Caco-2 (cell line): ENCODE measurements at regions of chr14 and their contacts with region 1.

Region 1: GRCh38 chr14:104976198-104977007 is 1.8 kb downstream of the AHNAK2 start:
- DNase-seq: peak; percentile 85 to 91
- H3K4me3 ChIP-seq: no peak overlapping the region
- H3K4me3 Mint-ChIP-seq: peak overlapping the region; percentile 59
- H3K27ac Mint-ChIP-seq: no peak overlapping the region
- H3K4me1 ChIP-seq: peaks cover 13% of the 10 kb centered on the region
- H3K4me1 Mint-ChIP-seq: peaks cover 7% of the 10 kb centered on the region
- H3K27me3 ChIP-seq: no peaks in the 10 kb centered on the region
- H3K27me3 Mint-ChIP-seq: peaks cover 2% of the 10 kb centered on the region
- CTCF ChIP-seq: peak; percentile 87 to 96

Region 2: GRCh38 chr14:104600141-104600643 is 376.2 kb before region 1 on chr14:
- CTCF ChIA-PET with region 1: no interaction called
- POLR2A ChIA-PET with region 1: no interaction called
- intact Hi-C with region 1: no loop called
- DNase-seq: no peak
- H3K4me3 ChIP-seq: no peak overlapping the region
- H3K4me3 Mint-ChIP-seq: no peak overlapping the region
- H3K27ac Mint-ChIP-seq: no peak overlapping the region
- H3K4me1 ChIP-seq: no peaks in the 10 kb centered on the region
- H3K4me1 Mint-ChIP-seq: no peaks in the 10 kb centered on the region
- H3K27me3 ChIP-seq: no peaks in the 10 kb centered on the region; the same call in 1 of the 2 replicates
- H3K27me3 Mint-ChIP-seq: peaks cover 19% of the 10 kb centered on the region
- CTCF ChIP-seq: no peak

Region 3: DNA sequence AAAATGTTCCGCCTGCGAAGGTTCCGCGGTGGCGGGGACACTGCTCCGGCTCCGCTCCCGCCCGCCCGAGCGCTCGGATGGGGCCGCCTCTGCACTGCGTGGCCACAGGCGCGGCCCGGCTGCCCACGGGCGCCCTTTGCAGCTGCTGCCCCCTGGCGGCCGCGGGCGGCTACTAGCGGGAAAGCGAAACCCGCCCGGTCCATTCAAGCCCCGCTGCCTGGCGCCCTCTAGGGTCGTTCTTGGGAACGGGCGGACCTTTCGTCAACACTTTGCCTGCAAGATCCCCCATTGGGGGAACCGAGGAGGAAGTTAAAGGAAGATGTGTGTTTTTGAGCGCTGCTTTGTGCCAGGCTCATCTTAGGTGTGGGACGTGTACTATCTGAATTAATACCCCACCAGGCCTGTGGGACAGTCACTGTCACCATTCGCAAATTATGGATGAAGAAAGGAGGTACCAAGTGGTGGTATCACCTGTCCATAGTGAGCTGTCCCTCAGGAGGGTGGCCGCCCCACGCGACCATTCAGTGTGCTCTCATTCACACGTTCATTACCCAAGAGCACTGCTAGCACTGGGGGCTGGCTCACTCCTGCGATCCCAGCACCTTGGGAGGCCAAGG is 69.4 kb after region 1 on chr14:
- CTCF ChIA-PET with region 1: interaction called, 7 read pairs
- POLR2A ChIA-PET with region 1: no interaction called
- intact Hi-C with region 1: loop called (anchors 1 kb)
- DNase-seq: peak; percentile 83 to 95
- H3K4me3 ChIP-seq: no peak overlapping the region
- H3K4me3 Mint-ChIP-seq: no peak overlapping the region
- H3K27ac Mint-ChIP-seq: no peak overlapping the region
- H3K4me1 ChIP-seq: peaks cover 3% of the 10 kb centered on the region; the same call in 1 of the 2 replicates
- H3K4me1 Mint-ChIP-seq: no peaks in the 10 kb centered on the region
- H3K27me3 ChIP-seq: no peaks in the 10 kb centered on the region; the same call in 1 of the 2 replicates
- H3K27me3 Mint-ChIP-seq: peaks cover 5% of the 10 kb centered on the region
- CTCF ChIP-seq: peak; percentile 99

Region 4: GRCh38 chr14:105086833-105087307 is 110.5 kb after region 1 on chr14:
- CTCF ChIA-PET with region 1: interaction called, 5 read pairs
- POLR2A ChIA-PET with region 1: no interaction called
- intact Hi-C with region 1: loop called (anchors 2 kb)
- DNase-seq: peak; percentile 84 to 92
- H3K4me3 ChIP-seq: peak overlapping the region; percentile 43
- H3K4me3 Mint-ChIP-seq: peak overlapping the region; percentile 77
- H3K27ac Mint-ChIP-seq: peak overlapping the region; percentile 74
- H3K4me1 ChIP-seq: peaks cover 51% of the 10 kb centered on the region
- H3K4me1 Mint-ChIP-seq: peaks cover 2% of the 10 kb centered on the region
- H3K27me3 ChIP-seq: no peaks in the 10 kb centered on the region
- H3K27me3 Mint-ChIP-seq: peaks cover 13% of the 10 kb centered on the region
- CTCF ChIP-seq: peak; percentile 54 to 61

Region 5: DNA sequence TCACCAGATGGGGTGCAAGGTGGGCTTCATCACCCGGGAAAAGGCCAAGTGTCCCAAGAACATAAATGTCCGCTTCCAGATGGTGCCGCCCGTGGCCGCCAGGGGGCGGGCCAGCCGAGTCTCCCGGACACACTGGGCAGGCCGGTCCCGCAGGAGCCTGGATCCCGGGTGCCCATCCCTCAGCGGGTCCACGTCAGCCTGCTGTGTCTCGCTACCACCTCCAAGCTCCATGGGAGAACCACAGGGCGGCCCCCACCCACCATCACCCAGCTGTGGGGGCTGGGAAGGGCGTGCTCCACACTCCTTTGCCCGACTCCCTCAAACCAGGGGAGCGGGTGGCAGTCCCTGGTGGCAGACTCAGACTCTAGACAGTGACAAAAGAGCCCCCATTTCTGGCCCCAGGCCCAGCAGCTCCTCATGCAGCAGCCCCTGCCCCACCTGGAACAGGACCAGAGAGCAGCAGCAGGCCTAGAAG is 226.7 kb after region 1 on chr14:
- CTCF ChIA-PET with region 1: no interaction called
- POLR2A ChIA-PET with region 1: no interaction called
- intact Hi-C with region 1: no loop called
- DNase-seq: peak; percentile 74 to 87
- H3K4me3 ChIP-seq: no peak overlapping the region
- H3K4me3 Mint-ChIP-seq: no peak overlapping the region
- H3K27ac Mint-ChIP-seq: no peak overlapping the region
- H3K4me1 ChIP-seq: 0 out of 2 replicates have a peak, but pooled peaks cover 3% of the 10 kb centered on the region
- H3K4me1 Mint-ChIP-seq: peaks cover 6% of the 10 kb centered on the region
- H3K27me3 ChIP-seq: no peaks in the 10 kb centered on the region
- H3K27me3 Mint-ChIP-seq: peaks cover 4% of the 10 kb centered on the region
- CTCF ChIP-seq: peak; percentile 91 to 93